PC-9 (cell line): ENCODE measurements at regions of chr9 and their contacts with region 1.

Region 1: DNA sequence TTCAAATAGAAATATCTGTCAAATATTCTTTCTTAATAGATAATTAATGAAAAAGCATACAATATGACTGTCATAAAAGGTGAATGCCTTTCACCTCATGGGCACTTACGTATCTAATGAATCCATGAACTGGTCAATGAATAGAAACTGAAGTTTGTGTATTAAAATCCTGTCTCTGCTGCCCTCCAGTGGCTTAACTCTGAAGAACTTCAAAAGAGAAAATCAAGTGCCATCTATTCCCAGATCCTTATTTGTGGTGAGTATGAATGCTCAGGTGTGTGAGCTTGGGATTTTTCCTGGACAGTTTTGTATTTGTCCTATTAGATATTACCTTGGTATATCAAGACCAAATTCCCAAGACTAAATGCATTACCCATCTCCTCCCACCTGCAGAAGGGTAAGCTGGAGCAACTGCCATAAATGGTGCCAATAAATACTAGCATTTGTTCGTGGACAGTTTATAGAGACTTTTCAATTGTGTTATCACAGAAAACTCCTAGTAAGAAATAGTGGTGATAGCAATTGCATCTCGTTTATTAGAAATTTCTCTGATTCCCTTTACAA is 44.0 kb upstream of the SVEP1 start:
- DNase-seq: peak; percentile 48 to 58
- H3K4me3 ChIP-seq: no peak overlapping the region
- H3K27ac ChIP-seq: no peak overlapping the region
- H3K4me1 ChIP-seq: no peaks in the 10 kb centered on the region
- H3K27me3 ChIP-seq: no peaks in the 10 kb centered on the region
- CTCF ChIP-seq: peak; percentile 87

Region 2: DNA sequence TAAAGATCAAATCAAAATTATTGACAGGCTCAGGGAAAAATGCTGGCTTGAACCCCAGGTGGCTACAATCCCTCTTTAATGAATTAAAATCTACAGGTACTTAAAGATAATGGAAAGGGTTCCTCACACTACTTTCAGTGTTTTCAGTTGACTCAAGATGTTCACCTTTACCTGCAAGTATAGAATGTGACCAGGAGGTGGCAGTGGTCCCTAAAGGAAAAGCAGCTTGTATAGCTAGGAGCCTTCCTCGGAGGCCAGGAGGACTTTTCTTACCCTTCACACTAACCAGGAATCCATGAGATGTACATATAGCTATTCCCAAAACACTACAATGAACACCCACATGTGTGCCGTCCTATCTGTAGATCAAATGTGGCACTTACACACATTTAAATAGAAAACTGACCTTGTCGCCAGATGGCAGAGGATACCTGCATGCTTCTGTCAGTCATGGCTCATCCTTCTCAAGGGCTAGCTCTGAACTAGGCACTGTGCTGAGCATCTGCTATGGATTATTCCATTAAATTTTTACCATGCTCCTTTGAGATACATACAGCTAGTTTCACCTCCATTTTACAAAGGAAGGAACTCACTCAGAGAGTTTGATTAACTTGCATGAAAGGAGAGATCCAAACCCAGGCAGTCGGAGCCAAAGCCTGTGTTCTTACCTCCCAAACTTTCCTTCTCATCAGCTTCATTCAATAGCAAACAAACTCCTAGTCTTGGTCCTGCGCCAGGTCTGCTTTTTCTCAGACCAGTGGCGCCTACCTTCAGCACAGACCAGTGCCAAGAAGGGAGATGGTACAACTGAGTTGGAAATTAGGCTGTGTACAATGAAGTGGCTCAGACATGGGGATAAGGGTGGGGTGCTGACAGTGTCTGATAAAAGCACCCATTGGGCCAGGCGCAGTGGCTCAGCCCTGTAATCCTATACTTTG is 440.1 kb before region 1 on chr9:
- CTCF ChIA-PET with region 1: no interaction called
- POLR2A ChIA-PET with region 1: no interaction called
- intact Hi-C with region 1: loop called (anchors 1 kb)
- DNase-seq: peak; percentile 60 to 65
- H3K4me3 ChIP-seq: no peak overlapping the region
- H3K27ac ChIP-seq: no peak overlapping the region
- H3K4me1 ChIP-seq: peaks cover 26% of the 10 kb centered on the region
- H3K27me3 ChIP-seq: no peaks in the 10 kb centered on the region
- CTCF ChIP-seq: peak; percentile 87

Region 3: GRCh38 chr9:110351009-110351467 is 272.5 kb before region 1 on chr9:
- CTCF ChIA-PET with region 1: no interaction called
- POLR2A ChIA-PET with region 1: no interaction called
- intact Hi-C with region 1: loop called (anchors 2 kb)
- DNase-seq: peak; percentile 72 to 97
- H3K4me3 ChIP-seq: no peak overlapping the region
- H3K27ac ChIP-seq: peak overlapping the region; percentile 73
- H3K4me1 ChIP-seq: peaks cover 23% of the 10 kb centered on the region
- H3K27me3 ChIP-seq: no peaks in the 10 kb centered on the region
- CTCF ChIP-seq: no peak

Region 4: GRCh38 chr9:110452227-110452801 is 171.2 kb before region 1 on chr9:
- CTCF ChIA-PET with region 1: interaction called, 3 read pairs
- POLR2A ChIA-PET with region 1: no interaction called
- intact Hi-C with region 1: loop called (anchors 1 kb)
- DNase-seq: no peak
- H3K4me3 ChIP-seq: no peak overlapping the region
- H3K27ac ChIP-seq: no peak overlapping the region
- H3K4me1 ChIP-seq: no peaks in the 10 kb centered on the region
- H3K27me3 ChIP-seq: no peaks in the 10 kb centered on the region
- CTCF ChIP-seq: peak; percentile 68

Region 5: DNA sequence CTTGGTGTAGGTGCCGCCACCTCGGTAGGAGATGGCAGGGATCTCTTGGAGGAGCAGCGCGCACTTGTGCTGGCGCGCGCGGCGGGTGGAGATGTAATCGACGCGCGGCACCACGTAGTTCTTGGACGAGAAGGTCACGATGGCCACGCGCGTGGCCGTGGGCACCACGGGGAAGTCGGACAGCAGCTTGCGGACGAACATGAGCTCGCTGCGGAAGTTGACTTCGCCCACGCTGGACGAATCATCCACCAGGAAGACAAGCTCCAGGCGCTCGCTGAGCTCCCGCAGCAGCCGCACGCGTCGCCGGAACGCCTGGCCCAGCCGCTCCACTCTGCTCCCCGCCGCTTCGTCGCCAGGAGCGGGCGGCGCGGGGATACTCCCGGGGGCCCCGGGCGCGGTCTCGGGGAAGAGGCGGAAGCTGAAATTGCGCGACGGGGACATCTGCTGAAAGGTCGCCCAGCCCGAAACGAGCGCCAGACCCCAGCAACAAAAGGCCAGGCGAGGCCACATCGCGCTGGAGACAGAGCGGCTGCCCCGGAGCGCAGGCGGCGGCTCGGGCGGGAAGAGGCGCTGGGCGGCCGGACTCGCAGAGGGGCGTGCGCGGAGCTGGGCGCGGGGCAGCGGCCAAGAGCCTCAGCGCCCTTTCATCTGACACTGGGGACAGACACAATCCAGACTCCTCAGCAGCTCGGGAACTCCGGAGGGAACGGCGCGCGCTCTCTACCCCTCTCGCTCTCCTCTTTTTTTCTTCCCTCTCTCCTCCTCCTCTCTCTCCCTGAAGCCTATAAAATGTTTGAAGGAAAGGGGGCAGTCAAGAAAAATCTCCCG is 44.3 kb before region 1 on chr9 and contains the start of gene SVEP1:
- CTCF ChIA-PET with region 1: no interaction called
- POLR2A ChIA-PET with region 1: no interaction called
- intact Hi-C with region 1: loop called (anchors 2 kb)
- DNase-seq: peak in 1 of 2 experiments; percentile 37
- H3K4me3 ChIP-seq: peak within 1 kb of the TSS; percentile 65
- H3K27ac ChIP-seq: peak within 1 kb of the TSS; percentile 99
- H3K4me1 ChIP-seq: peaks cover 62% of the 10 kb centered on the region
- H3K27me3 ChIP-seq: no peaks in the 10 kb centered on the region
- CTCF ChIP-seq: no peak
- total RNA-seq, gene SVEP1: 2.9 and 3.3 TPM in 2 replicates